Activated naive CD4-positive, alpha-beta T cell treated with anti-CD3 and anti-CD28 coated beads for 36 hours (primary cell): ENCODE measurements at regions of chr15 and their contacts with region 1.

Region 1: GRCh38 chr15:42474827-42475226 is 16.1 kb downstream of the ZNF106 start:
- DNase-seq: no peak
- H3K4me3 Mint-ChIP-seq: no peak overlapping the region
- H3K27ac Mint-ChIP-seq: no peak overlapping the region
- H3K4me1 Mint-ChIP-seq: peaks cover 7% of the 10 kb centered on the region
- H3K27me3 Mint-ChIP-seq: no peaks in the 10 kb centered on the region

Region 2: DNA sequence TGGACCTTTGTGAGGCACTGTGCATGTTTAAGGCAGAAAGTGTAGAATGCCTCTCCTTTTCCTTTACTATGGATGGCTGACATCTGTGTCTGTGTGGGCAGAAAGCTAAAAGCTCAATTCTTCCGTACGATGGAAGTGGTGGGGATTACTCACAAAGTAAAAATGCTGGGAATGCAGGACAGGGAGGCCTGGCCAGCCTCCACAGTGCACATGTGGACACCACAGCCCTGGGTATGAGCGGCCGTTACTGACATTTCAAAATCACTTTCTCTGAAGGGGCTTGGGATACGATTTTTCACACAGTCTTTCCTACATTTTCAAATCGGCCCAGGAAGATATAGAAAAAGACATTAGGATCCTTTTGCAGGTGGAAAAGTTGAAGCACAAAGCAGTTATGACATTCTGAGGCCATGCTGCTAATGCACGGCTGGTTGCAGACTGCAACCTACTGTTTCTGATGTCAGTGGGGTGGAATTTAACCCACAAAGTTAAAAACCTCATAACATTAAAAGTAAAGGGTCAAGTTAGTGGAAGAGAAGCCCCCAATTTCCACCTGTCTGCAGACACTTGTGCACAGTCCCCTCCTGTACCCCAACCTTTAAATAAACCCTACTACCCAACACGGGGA is 530.4 kb before region 1 on chr15:
- CTCF ChIA-PET with region 1: no interaction called
- intact Hi-C with region 1: no loop called
- DNase-seq: no peak
- H3K4me3 Mint-ChIP-seq: no peak overlapping the region
- H3K27ac Mint-ChIP-seq: peak overlapping the region; percentile 17
- H3K4me1 Mint-ChIP-seq: peaks cover 14% of the 10 kb centered on the region
- H3K27me3 Mint-ChIP-seq: no peaks in the 10 kb centered on the region

Region 3: DNA sequence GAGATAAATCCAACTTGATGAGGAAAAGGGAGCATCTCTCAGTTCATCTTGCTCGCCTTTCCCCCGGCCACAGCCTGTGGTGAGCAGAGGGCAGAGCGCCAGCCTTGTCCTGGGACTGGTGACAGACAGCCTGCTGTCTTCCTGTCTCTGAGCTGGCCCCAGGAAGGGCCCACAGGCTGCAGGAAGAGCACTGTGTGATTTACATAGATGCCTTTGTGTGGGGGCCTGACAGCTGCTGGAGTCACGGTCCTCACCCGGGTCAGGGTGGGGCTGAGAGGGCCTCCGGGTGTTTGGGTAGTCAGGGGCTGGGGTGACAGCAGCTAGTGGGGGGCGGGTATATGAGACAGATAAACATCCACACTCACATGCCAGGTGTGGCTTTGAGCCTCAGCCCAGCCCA is 409.8 kb before region 1 on chr15:
- CTCF ChIA-PET with region 1: no interaction called
- intact Hi-C with region 1: loop called (anchors 1 kb)
- DNase-seq: no peak
- H3K4me3 Mint-ChIP-seq: no peak overlapping the region
- H3K27ac Mint-ChIP-seq: no peak overlapping the region
- H3K4me1 Mint-ChIP-seq: no peaks in the 10 kb centered on the region
- H3K27me3 Mint-ChIP-seq: peaks cover 9% of the 10 kb centered on the region

Region 4: GRCh38 chr15:42215913-42216829 is 258.7 kb before region 1 on chr15:
- CTCF ChIA-PET with region 1: no interaction called
- intact Hi-C with region 1: loop called (anchors 5 kb)
- DNase-seq: no peak
- H3K4me3 Mint-ChIP-seq: no peak overlapping the region
- H3K27ac Mint-ChIP-seq: peak overlapping the region; percentile 59
- H3K4me1 Mint-ChIP-seq: peaks cover 30% of the 10 kb centered on the region
- H3K27me3 Mint-ChIP-seq: no peaks in the 10 kb centered on the region